HepG2 (cell line): ENCODE measurements at regions of chr6 and their contacts with region 1.

Region 1: GRCh38 chr6:76768556-76768955 is 694.7 kb downstream of the HTR1B start:
- DNase-seq: no peak
- ATAC-seq: no peak
- H3K4me3 ChIP-seq: no peak overlapping the region
- H3K27ac ChIP-seq: no peak overlapping the region
- H3K4me1 ChIP-seq: no peaks in the 10 kb centered on the region
- H3K27me3 ChIP-seq: no peaks in the 10 kb centered on the region; a peak in 1 of 5 replicates
- CTCF ChIP-seq: no peak
- EP300 ChIP-seq: no peak
- POLR2A ChIP-seq: no peak
- RAD21 ChIP-seq: no peak

Region 2: GRCh38 chr6:76701610-76702009 is 66.9 kb before region 1 on chr6:
- CTCF ChIA-PET with region 1: no interaction called
- POLR2A ChIA-PET with region 1: no interaction called
- in situ Hi-C with region 1: no loop called
- intact Hi-C with region 1: loop called (anchors 10 kb)
- DNase-seq: no peak
- ATAC-seq: no peak
- H3K4me3 ChIP-seq: no peak overlapping the region
- H3K27ac ChIP-seq: no peak overlapping the region
- H3K4me1 ChIP-seq: no peaks in the 10 kb centered on the region
- H3K27me3 ChIP-seq: no peaks in the 10 kb centered on the region
- CTCF ChIP-seq: no peak
- EP300 ChIP-seq: no peak
- POLR2A ChIP-seq: no peak
- RAD21 ChIP-seq: no peak